Spleen (tissue), 13 donors: ENCODE measurements at regions of chr14 and their contacts with region 1.

Region 1: DNA sequence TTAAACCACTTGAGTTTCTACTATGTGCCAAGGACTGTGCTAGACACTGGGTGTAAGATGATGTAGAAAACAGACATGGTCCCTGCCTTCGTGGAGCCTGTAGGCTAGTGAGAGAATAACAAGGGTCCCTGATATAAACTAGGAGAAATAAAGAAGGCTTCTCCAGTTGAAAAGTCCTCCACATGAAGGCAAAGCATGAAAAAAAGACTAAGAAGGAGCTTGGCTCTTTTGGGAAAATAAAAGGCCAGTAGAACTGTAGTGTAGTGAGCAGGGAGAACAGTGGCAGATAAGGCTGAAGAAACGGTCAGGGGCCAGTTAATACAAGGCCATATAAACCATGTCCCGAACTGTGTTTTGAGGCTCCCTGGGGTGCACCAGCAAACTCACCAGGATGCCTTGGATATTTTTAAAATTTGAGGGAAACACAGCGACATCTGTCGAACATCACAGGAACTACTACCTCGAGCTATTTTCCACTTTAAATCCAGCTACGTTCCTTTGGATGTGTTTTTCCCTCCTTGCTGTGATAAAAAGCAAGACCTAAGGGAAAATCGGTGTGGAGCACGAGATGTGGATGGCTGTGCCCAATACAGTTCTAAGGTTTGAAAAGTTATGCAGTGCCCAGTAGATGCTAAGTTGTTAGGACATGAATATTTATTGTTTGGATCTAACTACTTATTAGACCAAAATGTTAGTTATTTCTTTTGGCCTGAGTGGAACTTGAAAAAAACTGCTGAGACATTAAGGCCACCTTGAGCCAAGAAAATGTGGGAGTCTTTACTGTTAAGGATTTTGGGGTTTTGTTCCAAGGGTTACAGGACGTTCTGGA is 8.5 kb upstream of the CFL2 start:
- DNase-seq: no peak
- H3K4me3 ChIP-seq: no peak overlapping the region
- H3K27ac ChIP-seq: no peak overlapping the region
- H3K4me1 ChIP-seq: peaks cover 0 to 7% (median 2%) of the 10 kb centered on the region in 6 donors
- H3K27me3 ChIP-seq: no peaks in the 10 kb centered on the region
- CTCF ChIP-seq: peak; percentile 33 to 80 (median 74)
- POLR2A ChIP-seq: no peak

Region 2: GRCh38 chr14:34461334-34462131 is 261.4 kb before region 1 on chr14:
- intact Hi-C with region 1: no loop called
- DNase-seq: no peak
- H3K4me3 ChIP-seq: peak overlapping the region; percentile 63 to 90 (median 72)
- H3K27ac ChIP-seq: peak overlapping the region; percentile 62 to 93 (median 86)
- H3K4me1 ChIP-seq: peaks cover 0 to 36% (median 24%) of the 10 kb centered on the region in 6 donors
- H3K27me3 ChIP-seq: no peaks in the 10 kb centered on the region
- CTCF ChIP-seq: peak in 1 of 11 experiments; percentile 14
- POLR2A ChIP-seq: no peak

Region 3: GRCh38 chr14:34671716-34672115 is 51.2 kb before region 1 on chr14:
- intact Hi-C with region 1: loop called (anchors 2 kb)
- DNase-seq: no peak
- H3K4me3 ChIP-seq: no peak overlapping the region
- H3K27ac ChIP-seq: no peak overlapping the region
- H3K4me1 ChIP-seq: peaks cover 0 to 15% (median 8%) of the 10 kb centered on the region in 6 donors
- H3K27me3 ChIP-seq: no peaks in the 10 kb centered on the region
- CTCF ChIP-seq: no peak
- POLR2A ChIP-seq: no peak

Region 4: GRCh38 chr14:34843011-34843554 is 120.2 kb after region 1 on chr14:
- intact Hi-C with region 1: no loop called
- DNase-seq: no peak
- H3K4me3 ChIP-seq: no peak overlapping the region
- H3K27ac ChIP-seq: peak overlapping the region in 6 of 8 donors; percentile 20 to 82 (median 62)
- H3K4me1 ChIP-seq: peaks cover 0 to 41% (median 15%) of the 10 kb centered on the region in 6 donors
- H3K27me3 ChIP-seq: no peaks in the 10 kb centered on the region
- CTCF ChIP-seq: no peak
- POLR2A ChIP-seq: no peak